Body of pancreas (tissue), 4 donors: ENCODE measurements at regions of chr6 and their contacts with region 1.

Region 1: GRCh38 chr6:3251462-3252314 is 7.1 kb upstream of the PSMG4 start:
- DNase-seq: peak; percentile 83 to 88 (median 86)
- ATAC-seq: peak; percentile 93
- H3K4me3 ChIP-seq: no peak overlapping the region
- H3K27ac ChIP-seq: no peak overlapping the region
- H3K4me1 ChIP-seq: peaks cover 11% of the 10 kb centered on the region
- H3K27me3 ChIP-seq: no peaks in the 10 kb centered on the region
- CTCF ChIP-seq: peak; percentile 94 to 98 (median 97)
- POLR2A ChIP-seq: no peak

Region 2: DNA sequence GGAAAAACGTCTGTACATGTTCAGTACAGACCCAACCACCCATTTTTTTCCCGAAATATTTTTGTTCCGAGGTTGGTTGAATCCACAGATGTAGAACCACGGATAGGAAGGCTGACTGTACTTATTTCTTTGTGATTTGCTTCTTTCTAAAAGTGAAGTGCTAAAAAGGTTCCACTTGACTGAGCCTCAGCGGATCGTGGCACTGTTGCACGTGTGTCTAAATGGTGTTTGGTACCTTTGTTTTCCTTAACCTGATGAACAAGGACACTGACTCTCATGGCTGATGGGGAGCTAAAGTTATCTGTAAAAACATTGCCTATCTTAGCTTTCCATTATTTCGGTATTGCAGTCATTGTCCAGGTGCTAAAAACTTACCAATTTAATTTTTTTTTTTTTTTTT is 127.0 kb before region 1 on chr6:
- intact Hi-C with region 1: loop called (anchors 5 kb)
- DNase-seq: no peak
- ATAC-seq: no peak
- H3K4me3 ChIP-seq: no peak overlapping the region
- H3K27ac ChIP-seq: no peak overlapping the region
- H3K4me1 ChIP-seq: peaks cover 47% of the 10 kb centered on the region
- H3K27me3 ChIP-seq: no peaks in the 10 kb centered on the region
- CTCF ChIP-seq: no peak
- POLR2A ChIP-seq: no peak